ENCODE measurements at regions of chr6 and their contacts with region 1.

Region 1: GRCh38 chr6:18330548-18331081 is 56.5 kb upstream of the RNF144B start:
- DNase-seq: peak; percentile 31
- CTCF ChIP-seq: no peak

Region 2: DNA sequence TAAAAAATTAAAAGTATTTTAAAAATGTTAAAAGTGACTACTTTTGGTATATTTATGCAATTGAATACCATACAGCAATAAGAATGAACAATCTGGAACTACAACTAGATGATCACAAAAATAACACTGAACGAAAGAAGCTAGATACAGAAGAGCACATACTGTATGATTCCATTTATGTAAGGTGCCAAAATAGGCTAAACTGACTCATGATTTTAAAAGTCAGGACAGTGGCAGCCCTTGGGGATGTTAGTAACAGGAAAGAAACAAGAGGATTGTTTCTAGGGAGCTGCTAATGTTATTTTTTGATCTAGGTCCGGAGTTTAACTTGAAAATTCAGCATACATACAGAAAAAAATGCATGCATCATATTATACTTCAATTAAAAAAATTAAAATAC is 385.5 kb before region 1 on chr6:
- in situ Hi-C with region 1: no loop called
- DNase-seq: no peak
- CTCF ChIP-seq: no peak

Region 3: GRCh38 chr6:18088419-18089296 is 242.0 kb before region 1 on chr6:
- in situ Hi-C with region 1: no loop called
- DNase-seq: no peak
- CTCF ChIP-seq: no peak

Region 4: DNA sequence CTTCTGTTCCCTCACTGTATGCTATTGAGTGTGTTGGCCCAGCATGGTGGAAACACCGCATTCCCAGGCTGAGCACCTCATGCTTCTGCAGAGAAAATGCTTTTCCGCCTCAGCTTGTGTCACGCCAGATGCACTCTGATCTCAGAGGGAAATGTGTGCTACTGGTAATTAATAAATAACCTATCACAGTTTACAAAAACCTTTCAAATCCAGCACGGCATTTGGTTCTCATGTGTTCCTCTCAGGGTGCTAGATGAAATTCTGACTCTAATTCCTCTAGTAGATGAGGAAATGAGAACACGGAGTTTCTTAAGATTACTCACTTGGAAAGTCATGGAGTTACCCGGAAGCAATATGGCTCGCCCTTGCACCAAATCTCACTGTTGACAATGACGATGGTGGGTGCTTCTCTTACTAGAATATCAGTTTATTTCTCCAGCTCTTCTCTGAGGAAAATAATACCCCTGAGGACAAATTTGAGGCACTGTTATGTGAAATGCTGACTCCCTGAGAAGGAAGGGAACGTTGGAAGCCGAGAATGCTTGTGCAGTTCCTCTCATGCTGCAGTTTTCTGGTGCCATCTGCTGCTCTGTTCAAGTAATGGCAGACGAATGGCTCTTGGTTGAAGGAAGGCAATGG is 173.1 kb after region 1 on chr6:
- in situ Hi-C with region 1: loop called (anchors 10 kb)
- DNase-seq: peak; percentile 42
- CTCF ChIP-seq: peak; percentile 90